Activated CD8-positive, alpha-beta memory T cell treated with anti-CD3 and anti-CD28 coated beads, Interleukin-2, amount 10 ng/mL, durations not matched to agents 7 days and 5 days (primary cell): ENCODE measurements at regions of chr3 and their contacts with region 1.

Region 1: GRCh38 chr3:100068826-100069225 is 45.5 kb downstream of the FILIP1L start:
- DNase-seq: peak; percentile 91
- ATAC-seq: peak; percentile 79
- H3K4me3 Mint-ChIP-seq: no peak overlapping the region
- H3K27ac Mint-ChIP-seq: peak overlapping the region; percentile 4
- H3K4me1 Mint-ChIP-seq: peaks cover 50% of the 10 kb centered on the region
- H3K27me3 Mint-ChIP-seq: no peaks in the 10 kb centered on the region

Region 2: DNA sequence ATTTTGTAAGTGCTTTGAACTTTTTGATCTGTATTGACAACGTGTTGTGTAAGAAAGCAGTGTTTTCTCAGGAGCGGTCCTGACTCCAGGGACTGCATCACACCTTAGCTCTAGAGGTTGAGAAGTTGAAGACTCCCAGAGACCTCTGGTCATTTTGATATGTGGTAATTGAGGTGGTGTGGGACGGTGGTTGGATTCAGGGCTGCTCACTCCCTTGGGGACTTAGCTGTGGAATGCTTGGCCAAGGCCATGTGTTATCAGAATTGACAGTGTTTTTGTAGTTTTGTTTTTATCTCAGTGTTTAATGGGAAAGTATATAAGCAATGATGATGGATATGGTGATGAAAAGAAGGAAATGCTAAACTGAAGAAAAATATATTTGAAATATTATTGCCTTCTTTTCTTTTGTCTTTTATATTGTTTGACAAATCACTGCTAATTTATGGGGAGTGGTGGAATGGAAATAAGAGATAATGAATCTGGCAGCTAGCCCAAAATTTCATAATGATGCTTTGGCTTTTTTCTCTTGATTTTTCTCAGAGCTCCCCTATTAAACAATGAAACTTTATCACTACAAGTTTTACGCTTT is 235.1 kb before region 1 on chr3:
- CTCF ChIA-PET with region 1: interaction called, 25 read pairs
- DNase-seq: no peak
- ATAC-seq: no peak
- H3K4me3 Mint-ChIP-seq: no peak overlapping the region
- H3K27ac Mint-ChIP-seq: no peak overlapping the region
- H3K4me1 Mint-ChIP-seq: peaks cover 10% of the 10 kb centered on the region
- H3K27me3 Mint-ChIP-seq: no peaks in the 10 kb centered on the region

Region 3: GRCh38 chr3:100057716-100058575 is 10.9 kb before region 1 on chr3:
- CTCF ChIA-PET with region 1: interaction called, 11 read pairs
- DNase-seq: no peak
- ATAC-seq: no peak
- H3K4me3 Mint-ChIP-seq: no peak overlapping the region
- H3K27ac Mint-ChIP-seq: no peak overlapping the region
- H3K4me1 Mint-ChIP-seq: peaks cover 20% of the 10 kb centered on the region
- H3K27me3 Mint-ChIP-seq: no peaks in the 10 kb centered on the region

Region 4: DNA sequence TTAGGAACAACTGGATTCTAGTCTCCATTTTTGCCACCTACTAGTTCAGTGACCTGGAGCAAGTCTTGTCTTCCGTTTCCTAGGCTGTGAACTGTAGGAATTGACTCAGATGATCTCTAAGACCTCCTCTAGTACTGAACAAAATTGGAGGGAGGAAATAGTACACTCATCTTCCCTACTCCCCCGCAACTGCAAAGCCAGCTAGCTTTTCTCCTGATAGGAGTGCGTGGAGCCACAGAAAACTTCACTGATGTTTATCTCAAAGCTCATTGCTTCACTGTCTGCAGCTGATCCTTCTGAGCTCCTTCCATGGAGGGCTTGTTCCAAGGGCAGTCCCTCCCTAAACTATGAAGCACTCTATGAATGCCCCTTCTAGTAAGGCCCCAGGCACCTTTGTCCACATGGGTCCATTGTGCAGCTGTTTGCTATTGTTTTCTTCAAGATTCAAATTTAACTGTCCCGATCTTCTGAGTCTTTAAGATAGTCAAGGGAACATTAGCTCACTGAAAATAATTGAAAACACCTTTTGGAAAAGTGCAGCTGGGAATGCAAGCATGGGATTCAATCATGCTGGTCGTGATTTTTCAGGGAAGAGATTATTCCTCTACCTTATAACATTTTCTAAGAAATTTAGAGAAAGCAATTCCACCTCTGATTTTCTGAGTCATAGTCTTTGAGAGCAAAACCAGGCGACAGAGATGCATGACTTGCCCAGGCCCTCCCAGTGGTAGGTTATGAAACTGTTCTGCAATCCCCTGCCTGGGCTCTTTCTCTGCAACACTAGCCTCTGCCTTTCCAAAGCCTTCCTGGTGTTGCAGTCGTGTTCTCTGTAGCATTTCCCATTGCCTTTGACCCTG is 21.2 kb after region 1 on chr3:
- CTCF ChIA-PET with region 1: interaction called, 59 read pairs
- DNase-seq: peak; percentile 65
- ATAC-seq: peak; percentile 87
- H3K4me3 Mint-ChIP-seq: no peak overlapping the region
- H3K27ac Mint-ChIP-seq: peak overlapping the region; percentile 47
- H3K4me1 Mint-ChIP-seq: peaks cover 52% of the 10 kb centered on the region
- H3K27me3 Mint-ChIP-seq: peaks cover 10% of the 10 kb centered on the region

Region 5: GRCh38 chr3:100144251-100144866 is 75.5 kb after region 1 on chr3:
- CTCF ChIA-PET with region 1: no interaction called
- DNase-seq: peak; percentile 59
- ATAC-seq: peak; percentile 91
- H3K4me3 Mint-ChIP-seq: no peak overlapping the region
- H3K27ac Mint-ChIP-seq: peak overlapping the region; percentile 71
- H3K4me1 Mint-ChIP-seq: peaks cover 23% of the 10 kb centered on the region
- H3K27me3 Mint-ChIP-seq: no peaks in the 10 kb centered on the region

Region 6: DNA sequence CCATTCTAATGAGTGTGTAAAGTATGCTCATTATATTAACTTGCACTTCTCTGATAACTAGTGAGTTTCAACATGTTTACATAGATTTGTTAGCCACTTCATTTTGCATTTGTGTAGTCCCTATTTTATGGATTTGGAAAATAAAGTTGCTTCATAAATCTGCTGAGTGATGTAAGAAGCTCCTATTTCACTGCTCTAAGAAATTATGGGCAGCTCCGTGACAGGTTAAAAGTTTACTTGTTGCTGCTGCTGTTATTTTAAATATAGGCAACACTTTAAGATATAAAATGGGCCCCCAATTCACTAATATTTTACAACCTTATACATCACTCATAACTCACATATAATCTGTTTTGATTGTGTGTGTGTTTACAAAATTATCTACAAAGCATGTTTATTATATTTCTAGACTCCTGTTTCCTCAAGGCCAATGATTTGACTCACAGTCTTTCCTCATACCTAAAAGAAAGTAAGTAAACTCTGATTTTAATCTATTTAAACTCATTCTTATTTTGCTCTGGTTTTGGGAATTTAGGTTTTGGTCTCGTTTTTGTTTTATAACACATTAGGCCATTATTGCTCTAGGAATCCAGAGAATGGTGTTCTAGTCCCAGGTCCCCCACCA is 97.2 kb after region 1 on chr3:
- CTCF ChIA-PET with region 1: no interaction called
- DNase-seq: no peak
- ATAC-seq: no peak
- H3K4me3 Mint-ChIP-seq: no peak overlapping the region
- H3K27ac Mint-ChIP-seq: no peak overlapping the region
- H3K4me1 Mint-ChIP-seq: no peaks in the 10 kb centered on the region
- H3K27me3 Mint-ChIP-seq: no peaks in the 10 kb centered on the region

Region 7: GRCh38 chr3:100254168-100254777 is 185.4 kb after region 1 on chr3:
- CTCF ChIA-PET with region 1: interaction called, 54 read pairs
- DNase-seq: peak; percentile 72
- ATAC-seq: peak; percentile 92
- H3K4me3 Mint-ChIP-seq: no peak overlapping the region
- H3K27ac Mint-ChIP-seq: no peak overlapping the region
- H3K4me1 Mint-ChIP-seq: peaks cover 14% of the 10 kb centered on the region
- H3K27me3 Mint-ChIP-seq: no peaks in the 10 kb centered on the region

Region 8: GRCh38 chr3:100260685-100261484 is 192.1 kb after region 1 on chr3 and contains the start of gene TBC1D23:
- CTCF ChIA-PET with region 1: interaction called, 17 read pairs
- DNase-seq: peak; percentile 99
- ATAC-seq: peak; percentile 100
- H3K4me3 Mint-ChIP-seq: peak within 1 kb of the TSS; percentile 87
- H3K27ac Mint-ChIP-seq: peak within 1 kb of the TSS; percentile 90
- H3K4me1 Mint-ChIP-seq: peaks cover 45% of the 10 kb centered on the region
- H3K27me3 Mint-ChIP-seq: no peaks in the 10 kb centered on the region
- total RNA-seq, gene TBC1D23: 23.4 to 30.1 TPM